ENCODE measurements at regions of chr5 and their contacts with region 1.

Region 1: GRCh38 chr5:7868773-7869473 is at the starts of genes FASTKD3 and MTRR:
- DNase-seq: peak; percentile 92
- ATAC-seq: peak; percentile 99
- H3K4me3 ChIP-seq: peak within 1 kb of the TSS; percentile 82 to 92 (median 87)
- H3K4me3 Mint-ChIP-seq: peak within 1 kb of the TSS; percentile 93
- H3K27ac ChIP-seq: peak within 1 kb of the TSS; percentile 31 to 79
- H3K27ac Mint-ChIP-seq: peak within 1 kb of the TSS; percentile 86
- H3K4me1 ChIP-seq: peaks cover 23 to 24% of the 10 kb centered on the region in 2 donors
- H3K4me1 Mint-ChIP-seq: peaks cover 64% of the 10 kb centered on the region
- H3K27me3 ChIP-seq: no peaks in the 10 kb centered on the region
- H3K27me3 Mint-ChIP-seq: no peaks in the 10 kb centered on the region
- CTCF ChIP-seq: no peak
- total RNA-seq, gene FASTKD3: 10.0 and 11.0 TPM in 2 replicates
- total RNA-seq, gene MTRR: 60.5 and 67.8 TPM in 2 replicates

Region 2: GRCh38 chr5:6377905-6378765 is 1490.8 kb before region 1 on chr5 and contains the start of gene MED10:
- CTCF ChIA-PET with region 1: no interaction called
- POLR2A ChIA-PET with region 1: no interaction called
- intact Hi-C with region 1: loop called (anchors 2 kb)
- DNase-seq: peak; percentile 94
- ATAC-seq: peak; percentile 99
- H3K4me3 ChIP-seq: peak within 1 kb of the TSS; percentile 68 to 97 (median 82)
- H3K4me3 Mint-ChIP-seq: peak within 1 kb of the TSS; percentile 95
- H3K27ac ChIP-seq: peak within 1 kb of the TSS; percentile 73 to 76
- H3K27ac Mint-ChIP-seq: peak within 1 kb of the TSS; percentile 95
- H3K4me1 ChIP-seq: peaks cover 16 to 21% of the 10 kb centered on the region in 2 donors
- H3K4me1 Mint-ChIP-seq: peaks cover 34% of the 10 kb centered on the region
- H3K27me3 ChIP-seq: no peaks in the 10 kb centered on the region
- H3K27me3 Mint-ChIP-seq: peaks cover 3% of the 10 kb centered on the region
- CTCF ChIP-seq: no peak
- total RNA-seq, gene MED10: 49.9 and 51.4 TPM in 2 replicates

Region 3: DNA sequence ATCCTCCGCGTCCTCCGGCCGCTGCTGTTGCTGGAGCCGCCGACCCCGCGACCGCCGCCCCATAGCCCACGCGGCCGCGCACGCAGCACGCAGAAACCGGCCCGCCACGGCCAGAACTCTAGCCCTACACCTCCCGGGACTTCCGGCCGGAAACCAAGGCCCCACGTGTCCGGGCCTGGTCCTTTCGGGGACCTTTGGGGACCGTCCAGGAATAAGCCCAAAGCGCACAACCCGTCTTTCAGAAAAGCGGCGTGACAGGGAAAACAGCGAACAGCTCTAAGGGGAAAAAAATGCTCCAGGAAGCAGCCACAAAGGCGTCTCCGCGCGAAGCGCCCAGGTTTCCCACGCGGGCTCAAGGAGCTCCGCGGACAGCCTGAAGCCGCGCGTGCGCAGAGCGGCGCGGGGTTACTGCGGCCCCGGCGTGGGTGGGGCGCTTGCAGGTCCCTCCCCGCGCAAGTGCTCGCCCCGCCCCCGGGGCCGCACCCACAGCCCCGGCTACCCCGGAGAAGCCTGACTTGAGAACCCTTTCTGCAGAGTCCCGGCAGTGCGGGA is 1235.9 kb before region 1 on chr5 and contains the starts of genes NSUN2 and SRD5A1:
- CTCF ChIA-PET with region 1: no interaction called
- POLR2A ChIA-PET with region 1: no interaction called
- intact Hi-C with region 1: loop called (anchors 2 kb)
- DNase-seq: peak; percentile 97
- ATAC-seq: peak; percentile 89
- H3K4me3 ChIP-seq: peak within 1 kb of the TSS; percentile 74 to 91 (median 84)
- H3K4me3 Mint-ChIP-seq: peak within 1 kb of the TSS; percentile 95
- H3K27ac ChIP-seq: peak within 1 kb of the TSS; percentile 98 to 99
- H3K27ac Mint-ChIP-seq: peak within 1 kb of the TSS; percentile 99
- H3K4me1 ChIP-seq: peaks cover 16 to 28% of the 10 kb centered on the region in 2 donors
- H3K4me1 Mint-ChIP-seq: peaks cover 38% of the 10 kb centered on the region
- H3K27me3 ChIP-seq: no peaks in the 10 kb centered on the region
- H3K27me3 Mint-ChIP-seq: no peaks in the 10 kb centered on the region
- CTCF ChIP-seq: no peak
- total RNA-seq, gene NSUN2: 83.7 and 85.0 TPM in 2 replicates
- total RNA-seq, gene SRD5A1: 20.8 and 29.2 TPM in 2 replicates

Region 4: GRCh38 chr5:7683753-7684152 is 185.2 kb before region 1 on chr5:
- CTCF ChIA-PET with region 1: no interaction called
- POLR2A ChIA-PET with region 1: no interaction called
- intact Hi-C with region 1: no loop called
- DNase-seq: no peak
- ATAC-seq: no peak
- H3K4me3 ChIP-seq: no peak overlapping the region
- H3K4me3 Mint-ChIP-seq: no peak overlapping the region
- H3K27ac ChIP-seq: no peak overlapping the region
- H3K27ac Mint-ChIP-seq: no peak overlapping the region
- H3K4me1 ChIP-seq: no peaks in the 10 kb centered on the region
- H3K4me1 Mint-ChIP-seq: no peaks in the 10 kb centered on the region
- H3K27me3 ChIP-seq: no peaks in the 10 kb centered on the region
- H3K27me3 Mint-ChIP-seq: no peaks in the 10 kb centered on the region
- CTCF ChIP-seq: no peak

Region 5: DNA sequence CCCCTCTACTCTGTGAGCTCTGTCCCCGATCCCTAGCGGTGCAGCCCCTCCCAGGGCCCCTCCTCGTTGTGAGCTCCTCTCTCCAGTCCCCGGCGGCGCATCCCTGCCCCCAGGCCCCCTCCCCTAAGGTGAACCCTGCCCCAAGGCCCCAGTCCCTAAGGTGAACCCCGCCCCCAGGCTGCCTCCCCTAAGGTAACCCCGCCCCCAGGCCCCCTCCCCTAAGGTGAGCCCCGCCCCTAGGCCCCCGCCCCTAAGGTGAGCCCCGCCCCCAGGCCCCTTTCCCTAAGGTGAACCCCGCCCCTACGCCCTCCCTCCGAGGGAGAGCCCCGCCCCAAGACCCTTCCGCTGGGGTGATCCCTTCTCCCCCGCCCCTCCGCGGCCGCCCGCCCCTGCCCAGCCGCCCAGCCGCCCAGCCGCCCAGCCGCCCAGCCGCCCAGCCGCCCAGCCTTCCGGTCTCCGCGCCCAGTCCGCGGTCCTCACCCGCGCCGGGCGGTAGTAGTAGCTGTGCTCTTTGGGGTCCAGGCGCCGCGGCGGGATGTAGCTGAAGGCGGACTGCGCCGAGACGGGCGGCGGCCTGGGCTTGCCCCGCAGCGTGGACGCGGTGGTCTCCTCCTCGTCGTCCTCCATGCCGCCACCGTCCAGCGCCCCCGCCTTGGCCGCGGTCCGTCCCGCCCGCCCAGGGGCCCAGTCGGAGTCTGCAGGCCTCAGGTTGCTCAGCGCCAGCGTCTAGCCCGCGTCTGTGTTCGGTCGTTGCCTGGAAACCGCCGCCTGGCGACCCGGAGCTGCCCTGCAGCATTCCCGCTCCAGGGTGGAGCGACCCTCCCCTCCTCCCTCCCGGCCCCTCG is 18.3 kb before region 1 on chr5 and contains the start of gene CFAP90:
- CTCF ChIA-PET with region 1: interaction called, 4 read pairs
- POLR2A ChIA-PET with region 1: interaction called, 3 read pairs
- intact Hi-C with region 1: loop called (anchors 1 kb)
- DNase-seq: peak; percentile 43
- ATAC-seq: peak; percentile 90
- H3K4me3 ChIP-seq: peak within 1 kb of the TSS in 4 of 5 experiments; percentile 28 to 56 (median 48)
- H3K4me3 Mint-ChIP-seq: peak within 1 kb of the TSS; percentile 90
- H3K27ac ChIP-seq: no peak within 1 kb of the TSS
- H3K27ac Mint-ChIP-seq: no peak within 1 kb of the TSS
- H3K4me1 ChIP-seq: peaks cover 15 to 20% of the 10 kb centered on the region in 2 donors
- H3K4me1 Mint-ChIP-seq: peaks cover 24% of the 10 kb centered on the region
- H3K27me3 ChIP-seq: peaks cover 0 to 36% (median 15%) of the 10 kb centered on the region in 4 experiments
- H3K27me3 Mint-ChIP-seq: peaks cover 17% of the 10 kb centered on the region
- CTCF ChIP-seq: no peak
- total RNA-seq, gene CFAP90: not detected in 2 replicates

Region 6: GRCh38 chr5:7886849-7887475 is 18.0 kb after region 1 on chr5:
- CTCF ChIA-PET with region 1: interaction called, 14 read pairs
- POLR2A ChIA-PET with region 1: no interaction called
- intact Hi-C with region 1: no loop called
- DNase-seq: peak; percentile 50
- ATAC-seq: no peak
- H3K4me3 ChIP-seq: no peak overlapping the region
- H3K4me3 Mint-ChIP-seq: no peak overlapping the region
- H3K27ac ChIP-seq: no peak overlapping the region
- H3K27ac Mint-ChIP-seq: no peak overlapping the region
- H3K4me1 ChIP-seq: no peaks in the 10 kb centered on the region
- H3K4me1 Mint-ChIP-seq: no peaks in the 10 kb centered on the region
- H3K27me3 ChIP-seq: no peaks in the 10 kb centered on the region
- H3K27me3 Mint-ChIP-seq: no peaks in the 10 kb centered on the region
- CTCF ChIP-seq: peak; percentile 73

Measured in B cell (primary cell).